Psoas muscle (tissue), 8 donors: ENCODE measurements at regions of chr9 and their contacts with region 1.

Region 1: GRCh38 chr9:119216651-119217331 is 152.4 kb downstream of the BRINP1 start:
- DNase-seq: peak; percentile 24 to 56
- ATAC-seq: peak in 2 of 4 donors; percentile 39 to 44
- H3K4me3 ChIP-seq: no peak overlapping the region
- H3K27ac ChIP-seq: no peak overlapping the region
- H3K4me1 ChIP-seq: no peaks in the 10 kb centered on the region
- H3K27me3 ChIP-seq: peaks cover 0 to 3% (median 0%) of the 10 kb centered on the region in 3 donors
- CTCF ChIP-seq: no peak

Region 2: GRCh38 chr9:119157196-119157595 is 59.6 kb before region 1 on chr9:
- intact Hi-C with region 1: loop called in 1 of 2 experiments (anchors 10 kb)
- DNase-seq: no peak
- ATAC-seq: no peak
- H3K4me3 ChIP-seq: no peak overlapping the region
- H3K27ac ChIP-seq: no peak overlapping the region
- H3K4me1 ChIP-seq: no peaks in the 10 kb centered on the region
- H3K27me3 ChIP-seq: no peaks in the 10 kb centered on the region
- CTCF ChIP-seq: no peak

Region 3: GRCh38 chr9:119234636-119235035 is 17.8 kb after region 1 on chr9:
- intact Hi-C with region 1: no loop called
- DNase-seq: no peak
- ATAC-seq: no peak
- H3K4me3 ChIP-seq: no peak overlapping the region
- H3K27ac ChIP-seq: no peak overlapping the region
- H3K4me1 ChIP-seq: no peaks in the 10 kb centered on the region
- H3K27me3 ChIP-seq: peaks cover 0 to 9% (median 0%) of the 10 kb centered on the region in 3 donors
- CTCF ChIP-seq: no peak